ENCODE measurements at regions of chr5 and their contacts with region 1.

Region 1: GRCh38 chr5:41856644-41857491 is 13.4 kb downstream of the OXCT1 start:
- DNase-seq: peak; percentile 54 to 72
- H3K4me3 ChIP-seq: no peak overlapping the region
- H3K4me3 Mint-ChIP-seq: no peak overlapping the region
- H3K27ac Mint-ChIP-seq: no peak overlapping the region
- H3K4me1 ChIP-seq: no peaks in the 10 kb centered on the region
- H3K4me1 Mint-ChIP-seq: no peaks in the 10 kb centered on the region
- H3K27me3 ChIP-seq: no peaks in the 10 kb centered on the region
- H3K27me3 Mint-ChIP-seq: no peaks in the 10 kb centered on the region
- CTCF ChIP-seq: peak; percentile 71 to 80

Region 2: GRCh38 chr5:41869739-41870626 is 13.1 kb after region 1 on chr5 and contains the start of gene OXCT1:
- CTCF ChIA-PET with region 1: no interaction called
- POLR2A ChIA-PET with region 1: no interaction called
- intact Hi-C with region 1: loop called (anchors 1 kb)
- DNase-seq: peak; percentile 73 to 82
- H3K4me3 ChIP-seq: peak within 1 kb of the TSS; percentile 64
- H3K4me3 Mint-ChIP-seq: peak within 1 kb of the TSS; percentile 74
- H3K27ac Mint-ChIP-seq: peak within 1 kb of the TSS; percentile 62
- H3K4me1 ChIP-seq: peaks cover 4% of the 10 kb centered on the region; the same call in 1 of the 2 replicates
- H3K4me1 Mint-ChIP-seq: peaks cover 7% of the 10 kb centered on the region
- H3K27me3 ChIP-seq: no peaks in the 10 kb centered on the region
- H3K27me3 Mint-ChIP-seq: no peaks in the 10 kb centered on the region
- CTCF ChIP-seq: no peak
- total RNA-seq, gene OXCT1: 20.6 and 22.5 TPM in 2 replicates

Region 3: GRCh38 chr5:41903892-41904799 is 47.3 kb after region 1 on chr5 and contains the start of gene RIMOC1:
- CTCF ChIA-PET with region 1: interaction called, 5 read pairs
- POLR2A ChIA-PET with region 1: interaction called, 4 read pairs
- intact Hi-C with region 1: loop called (anchors 1 kb)
- DNase-seq: peak; percentile 99
- H3K4me3 ChIP-seq: peak within 1 kb of the TSS; percentile 100
- H3K4me3 Mint-ChIP-seq: peak within 1 kb of the TSS; percentile 91
- H3K27ac Mint-ChIP-seq: peak within 1 kb of the TSS; percentile 97
- H3K4me1 ChIP-seq: no peaks in the 10 kb centered on the region
- H3K4me1 Mint-ChIP-seq: no peaks in the 10 kb centered on the region
- H3K27me3 ChIP-seq: no peaks in the 10 kb centered on the region
- H3K27me3 Mint-ChIP-seq: no peaks in the 10 kb centered on the region
- CTCF ChIP-seq: no peak
- total RNA-seq, gene RIMOC1: 29.5 and 30.2 TPM in 2 replicates

Region 4: DNA sequence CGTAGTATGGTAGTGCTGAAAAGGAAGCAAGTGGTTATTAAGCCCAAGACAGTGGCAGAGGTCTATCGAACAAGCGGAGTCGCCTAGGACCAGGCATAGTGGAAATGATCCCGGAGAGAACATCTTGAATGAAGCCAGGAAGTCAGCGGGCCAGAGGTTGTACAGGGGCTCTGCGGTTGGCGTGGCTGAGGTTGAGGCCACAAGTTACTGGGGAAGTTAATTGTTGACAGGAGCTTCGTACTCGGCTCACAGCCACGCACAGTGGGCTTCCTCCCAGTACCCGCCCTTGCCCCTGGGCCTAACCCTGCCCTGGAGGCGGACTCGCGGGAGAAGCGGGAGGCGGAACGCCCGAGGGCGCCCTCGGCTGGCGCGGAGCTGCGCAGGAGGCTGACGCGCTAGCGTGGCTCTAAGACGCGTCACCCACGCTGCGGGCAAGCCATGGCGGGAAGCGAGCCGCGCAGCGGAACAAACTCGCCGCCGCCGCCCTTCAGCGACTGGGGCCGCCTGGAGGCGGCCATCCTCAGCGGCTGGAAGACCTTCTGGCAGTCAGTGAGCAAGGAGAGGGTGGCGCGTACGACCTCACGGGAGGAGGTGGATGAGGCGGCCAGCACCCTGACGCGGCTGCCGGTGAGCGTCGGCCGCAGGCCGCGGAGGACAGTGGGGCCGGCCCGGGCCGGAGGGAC is 68.1 kb after region 1 on chr5 and contains the start of gene FBXO4:
- CTCF ChIA-PET with region 1: no interaction called
- POLR2A ChIA-PET with region 1: no interaction called
- intact Hi-C with region 1: loop called (anchors 1 kb)
- DNase-seq: peak; percentile 87
- H3K4me3 ChIP-seq: peak within 1 kb of the TSS; percentile 71
- H3K4me3 Mint-ChIP-seq: peak within 1 kb of the TSS; percentile 87
- H3K27ac Mint-ChIP-seq: peak within 1 kb of the TSS; percentile 92
- H3K4me1 ChIP-seq: peaks cover 7% of the 10 kb centered on the region
- H3K4me1 Mint-ChIP-seq: no peaks in the 10 kb centered on the region
- H3K27me3 ChIP-seq: no peaks in the 10 kb centered on the region
- H3K27me3 Mint-ChIP-seq: no peaks in the 10 kb centered on the region
- CTCF ChIP-seq: peak; percentile 36 to 81
- total RNA-seq, gene FBXO4: 8.1 and 9.7 TPM in 2 replicates

Region 5: DNA sequence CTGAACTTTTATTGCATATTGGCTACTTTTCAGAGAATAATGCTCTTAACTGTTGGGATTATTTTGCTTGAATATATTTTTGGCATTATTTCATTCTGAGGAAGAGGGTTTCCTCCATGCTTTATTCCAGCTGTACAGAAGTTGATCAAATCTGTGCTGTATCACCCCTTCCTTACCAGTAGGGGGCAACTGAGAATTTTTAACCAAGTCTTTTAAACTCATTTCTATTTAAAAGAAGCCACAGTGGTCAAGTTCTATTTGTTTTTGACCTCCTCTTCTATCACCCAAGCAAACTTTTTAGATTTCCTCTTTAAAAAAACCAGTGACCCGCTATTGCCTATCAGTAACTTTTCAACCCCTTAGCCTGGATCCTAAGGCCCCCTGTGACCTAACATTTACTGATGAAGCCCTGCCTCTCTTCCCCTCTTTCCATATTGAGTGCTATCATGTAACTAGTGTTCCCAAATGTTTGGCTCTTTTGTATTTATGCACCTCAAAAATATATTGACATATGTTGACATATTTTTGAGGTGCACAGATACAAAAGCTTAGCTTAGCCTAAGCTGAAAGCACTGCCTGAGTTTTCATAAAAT is 148.8 kb after region 1 on chr5:
- CTCF ChIA-PET with region 1: no interaction called
- POLR2A ChIA-PET with region 1: no interaction called
- intact Hi-C with region 1: loop called (anchors 5 kb)
- DNase-seq: no peak
- H3K4me3 ChIP-seq: no peak overlapping the region
- H3K4me3 Mint-ChIP-seq: no peak overlapping the region
- H3K27ac Mint-ChIP-seq: no peak overlapping the region
- H3K4me1 ChIP-seq: no peaks in the 10 kb centered on the region
- H3K4me1 Mint-ChIP-seq: no peaks in the 10 kb centered on the region
- H3K27me3 ChIP-seq: no peaks in the 10 kb centered on the region
- H3K27me3 Mint-ChIP-seq: peaks cover 2% of the 10 kb centered on the region
- CTCF ChIP-seq: peak; percentile 66 to 74

Region 6: DNA sequence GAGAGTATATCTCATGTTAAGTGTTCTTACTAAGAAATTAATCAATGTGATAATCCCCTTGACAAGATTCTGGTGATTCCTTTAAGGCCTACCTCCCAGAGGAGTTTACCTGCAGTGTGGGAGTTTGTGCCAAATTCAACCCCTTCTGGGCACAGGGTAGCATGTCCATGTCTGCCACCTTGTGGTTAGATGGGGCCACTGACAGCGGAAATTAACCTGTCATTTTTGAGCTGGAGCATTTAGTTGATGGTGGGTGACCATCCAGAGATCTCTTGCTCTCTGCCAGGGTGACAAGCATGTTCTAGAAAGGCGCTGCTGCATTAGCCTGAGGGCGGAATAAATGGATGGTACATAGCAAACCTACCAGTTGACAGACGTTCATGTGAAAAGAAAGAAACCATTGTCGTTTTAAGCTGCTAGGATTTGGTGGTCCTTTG is 200.4 kb after region 1 on chr5:
- CTCF ChIA-PET with region 1: interaction called, 47 read pairs
- POLR2A ChIA-PET with region 1: no interaction called
- intact Hi-C with region 1: loop called (anchors 1 kb)
- DNase-seq: peak; percentile 59 to 68
- H3K4me3 ChIP-seq: no peak overlapping the region
- H3K4me3 Mint-ChIP-seq: no peak overlapping the region
- H3K27ac Mint-ChIP-seq: no peak overlapping the region
- H3K4me1 ChIP-seq: no peaks in the 10 kb centered on the region
- H3K4me1 Mint-ChIP-seq: no peaks in the 10 kb centered on the region
- H3K27me3 ChIP-seq: no peaks in the 10 kb centered on the region
- H3K27me3 Mint-ChIP-seq: peaks cover 6% of the 10 kb centered on the region
- CTCF ChIP-seq: peak; percentile 75 to 82

Region 7: GRCh38 chr5:42089705-42090104 is 232.8 kb after region 1 on chr5:
- CTCF ChIA-PET with region 1: no interaction called
- POLR2A ChIA-PET with region 1: no interaction called
- intact Hi-C with region 1: no loop called
- DNase-seq: no peak
- H3K4me3 ChIP-seq: no peak overlapping the region
- H3K4me3 Mint-ChIP-seq: no peak overlapping the region
- H3K27ac Mint-ChIP-seq: no peak overlapping the region
- H3K4me1 ChIP-seq: no peaks in the 10 kb centered on the region
- H3K4me1 Mint-ChIP-seq: no peaks in the 10 kb centered on the region
- H3K27me3 ChIP-seq: no peaks in the 10 kb centered on the region
- H3K27me3 Mint-ChIP-seq: no peaks in the 10 kb centered on the region
- CTCF ChIP-seq: no peak

Region 8: GRCh38 chr5:42583322-42583721 is 726.5 kb after region 1 on chr5:
- CTCF ChIA-PET with region 1: interaction called, 3 read pairs
- POLR2A ChIA-PET with region 1: no interaction called
- intact Hi-C with region 1: loop called (anchors 1 kb)
- DNase-seq: peak; percentile 54 to 66
- H3K4me3 ChIP-seq: no peak overlapping the region
- H3K4me3 Mint-ChIP-seq: no peak overlapping the region
- H3K27ac Mint-ChIP-seq: no peak overlapping the region
- H3K4me1 ChIP-seq: no peaks in the 10 kb centered on the region
- H3K4me1 Mint-ChIP-seq: no peaks in the 10 kb centered on the region
- H3K27me3 ChIP-seq: no peaks in the 10 kb centered on the region
- H3K27me3 Mint-ChIP-seq: peaks cover 3% of the 10 kb centered on the region
- CTCF ChIP-seq: peak; percentile 69 to 72

Measured in Caco-2 (cell line).